Mammary epithelial cell (primary cell): ENCODE measurements at regions of chr12 and their contacts with region 1.

Region 1: GRCh38 chr12:118372541-118373495 is at the start of gene TAOK3:
- DNase-seq: peak; percentile 98
- H3K4me3 ChIP-seq: peak within 1 kb of the TSS; percentile 97 to 100 (median 98)
- H3K27ac ChIP-seq: peak within 1 kb of the TSS; percentile 72
- H3K4me1 ChIP-seq: peaks cover 28% of the 10 kb centered on the region
- H3K27me3 ChIP-seq: no peaks in the 10 kb centered on the region
- CTCF ChIP-seq: no peak
- total RNA-seq, gene TAOK3: 35.5 to 53.4 TPM

Region 2: DNA sequence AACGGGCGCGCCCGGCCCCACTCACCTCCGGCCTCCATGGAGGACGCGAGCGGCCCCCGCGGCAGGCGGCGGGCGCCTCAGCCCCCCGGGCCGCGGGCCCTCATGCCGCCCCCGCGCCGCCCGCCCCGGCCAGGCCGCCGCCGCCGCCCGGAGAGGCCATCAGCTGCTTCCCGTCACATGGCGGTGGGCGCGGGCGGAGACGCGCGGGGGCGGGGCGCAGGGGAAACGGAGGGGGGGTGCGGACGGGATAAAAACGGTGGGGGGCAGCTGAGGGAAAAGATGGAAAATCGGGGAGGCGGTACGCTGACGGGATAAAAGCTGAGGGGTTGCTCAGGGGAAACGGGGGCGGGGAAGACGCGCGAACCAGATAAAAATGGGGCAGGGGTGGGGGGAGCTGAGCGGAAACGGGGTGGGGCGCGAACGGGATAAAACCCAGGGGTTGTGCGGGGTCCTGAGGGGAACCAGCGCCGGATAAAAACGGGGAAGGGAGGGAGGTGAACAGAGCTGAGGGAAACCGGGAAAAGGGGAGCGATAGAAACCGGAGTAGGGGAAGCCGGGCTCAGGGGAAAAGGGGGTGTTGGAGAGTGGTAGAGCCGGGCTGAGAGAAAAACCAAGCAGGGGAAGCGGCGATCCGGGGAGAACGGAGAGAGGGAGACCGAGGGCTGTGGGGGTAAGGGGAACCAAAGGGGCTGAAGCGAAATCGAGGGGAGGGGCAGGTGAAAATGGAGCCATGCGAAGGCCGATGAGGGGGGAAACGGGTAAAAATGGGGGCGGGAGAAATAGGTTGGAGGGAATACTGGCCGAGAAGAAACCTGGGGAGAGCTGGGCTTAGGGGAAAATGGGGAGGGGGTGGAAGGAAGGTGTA is 311.6 kb before region 1 on chr12 and contains the start of gene WSB2:
- CTCF ChIA-PET with region 1: no interaction called
- dilution Hi-C with region 1: no loop called
- in situ Hi-C with region 1: no loop called
- intact Hi-C with region 1: loop called (anchors 1 kb)
- DNase-seq: peak; percentile 26
- H3K4me3 ChIP-seq: peak within 1 kb of the TSS; percentile 77 to 93 (median 84)
- H3K27ac ChIP-seq: peak within 1 kb of the TSS; percentile 82
- H3K4me1 ChIP-seq: peaks cover 11% of the 10 kb centered on the region
- H3K27me3 ChIP-seq: no peaks in the 10 kb centered on the region
- CTCF ChIP-seq: no peak
- total RNA-seq, gene WSB2: 93.5 to 165 TPM

Region 3: DNA sequence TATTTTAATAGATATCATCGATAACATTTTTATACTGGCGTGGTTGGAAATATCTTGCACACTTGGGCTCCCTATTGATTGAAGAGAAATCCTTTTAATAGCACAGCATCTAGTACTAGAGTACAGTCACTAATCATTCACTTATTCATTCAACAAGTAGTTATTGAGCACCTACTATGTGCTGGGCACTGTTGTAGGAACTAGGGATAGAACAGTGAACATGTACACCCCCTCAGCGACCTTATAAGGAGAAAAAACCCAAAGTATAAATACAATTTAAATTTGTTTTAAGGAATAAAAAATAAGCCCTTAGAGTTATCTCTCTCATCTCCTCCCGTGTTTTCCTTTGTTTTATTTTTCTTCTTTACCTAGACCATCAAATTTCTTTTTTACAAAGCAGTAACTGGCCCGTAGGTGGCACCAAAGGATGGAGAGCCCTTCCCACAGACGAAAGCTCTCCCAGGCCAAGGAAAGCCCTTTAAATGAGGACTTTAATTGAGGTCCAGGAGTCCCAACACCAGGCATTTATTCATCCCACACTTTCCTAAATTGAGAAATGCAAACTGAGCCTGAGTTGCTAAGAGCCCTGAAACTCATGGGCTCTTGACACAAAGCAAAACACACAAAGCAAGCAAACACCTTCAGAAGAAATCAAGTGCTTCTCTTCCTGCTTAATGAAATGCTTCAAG is 207.9 kb before region 1 on chr12:
- CTCF ChIA-PET with region 1: interaction called, 4 read pairs
- dilution Hi-C with region 1: no loop called
- in situ Hi-C with region 1: no loop called
- intact Hi-C with region 1: loop called (anchors 1 kb)
- DNase-seq: no peak
- H3K4me3 ChIP-seq: no peak overlapping the region
- H3K27ac ChIP-seq: no peak overlapping the region
- H3K4me1 ChIP-seq: no peaks in the 10 kb centered on the region
- H3K27me3 ChIP-seq: no peaks in the 10 kb centered on the region
- CTCF ChIP-seq: peak; percentile 33 to 57

Region 4: GRCh38 chr12:118237052-118237665 is 135.7 kb before region 1 on chr12:
- CTCF ChIA-PET with region 1: interaction called, 6 read pairs
- dilution Hi-C with region 1: no loop called
- in situ Hi-C with region 1: no loop called
- intact Hi-C with region 1: loop called (anchors 1 kb)
- DNase-seq: no peak
- H3K4me3 ChIP-seq: no peak overlapping the region
- H3K27ac ChIP-seq: peak overlapping the region; percentile 67
- H3K4me1 ChIP-seq: peaks cover 23% of the 10 kb centered on the region
- H3K27me3 ChIP-seq: no peaks in the 10 kb centered on the region
- CTCF ChIP-seq: no peak

Region 5: DNA sequence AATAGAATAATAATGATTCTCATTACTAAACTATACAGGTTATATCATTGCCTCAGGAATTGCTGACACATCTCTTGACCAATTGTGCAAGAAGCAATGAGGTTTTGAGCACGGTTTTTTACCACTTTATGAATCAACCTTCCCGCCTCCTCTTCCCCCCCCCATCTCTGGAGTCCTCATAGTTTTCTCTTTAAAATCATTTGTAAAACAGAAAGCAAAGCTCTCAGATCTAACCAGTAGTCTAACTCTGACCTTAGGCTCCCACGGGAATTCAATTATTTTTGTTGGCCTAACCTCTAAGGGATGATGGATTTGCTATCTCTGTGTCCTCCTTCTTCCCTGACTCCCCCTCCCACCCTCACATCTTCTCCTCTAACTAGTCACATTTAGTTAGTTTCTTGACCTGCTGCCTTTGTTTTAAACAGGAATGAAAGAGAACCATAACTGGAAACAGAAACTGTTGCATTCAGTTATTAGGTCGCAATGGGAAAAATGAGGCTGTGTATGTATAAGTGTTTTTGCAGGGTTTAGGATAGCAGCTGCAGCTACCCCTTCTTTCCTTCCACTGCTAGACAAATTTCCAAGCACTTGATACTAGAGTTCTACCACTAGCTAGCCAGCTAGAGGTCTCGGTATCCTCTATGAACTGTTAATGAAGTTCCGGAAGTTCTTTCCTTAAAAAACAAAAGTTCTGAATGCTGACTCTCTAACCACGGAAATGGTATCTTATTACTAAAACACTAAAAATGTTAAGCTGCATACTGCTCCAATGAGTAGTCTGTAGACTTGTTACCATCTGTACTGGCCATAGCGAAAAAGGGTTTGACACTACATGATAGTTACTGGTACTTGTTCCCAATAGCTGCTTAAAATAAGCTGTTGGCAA is 65.5 kb before region 1 on chr12:
- CTCF ChIA-PET with region 1: interaction called, 4 read pairs
- dilution Hi-C with region 1: no loop called
- in situ Hi-C with region 1: no loop called
- intact Hi-C with region 1: loop called (anchors 1 kb)
- DNase-seq: peak; percentile 84
- H3K4me3 ChIP-seq: peak overlapping the region; percentile 32 to 39 (median 36)
- H3K27ac ChIP-seq: peak overlapping the region; percentile 86
- H3K4me1 ChIP-seq: peaks cover 35% of the 10 kb centered on the region
- H3K27me3 ChIP-seq: no peaks in the 10 kb centered on the region
- CTCF ChIP-seq: no peak

Region 6: DNA sequence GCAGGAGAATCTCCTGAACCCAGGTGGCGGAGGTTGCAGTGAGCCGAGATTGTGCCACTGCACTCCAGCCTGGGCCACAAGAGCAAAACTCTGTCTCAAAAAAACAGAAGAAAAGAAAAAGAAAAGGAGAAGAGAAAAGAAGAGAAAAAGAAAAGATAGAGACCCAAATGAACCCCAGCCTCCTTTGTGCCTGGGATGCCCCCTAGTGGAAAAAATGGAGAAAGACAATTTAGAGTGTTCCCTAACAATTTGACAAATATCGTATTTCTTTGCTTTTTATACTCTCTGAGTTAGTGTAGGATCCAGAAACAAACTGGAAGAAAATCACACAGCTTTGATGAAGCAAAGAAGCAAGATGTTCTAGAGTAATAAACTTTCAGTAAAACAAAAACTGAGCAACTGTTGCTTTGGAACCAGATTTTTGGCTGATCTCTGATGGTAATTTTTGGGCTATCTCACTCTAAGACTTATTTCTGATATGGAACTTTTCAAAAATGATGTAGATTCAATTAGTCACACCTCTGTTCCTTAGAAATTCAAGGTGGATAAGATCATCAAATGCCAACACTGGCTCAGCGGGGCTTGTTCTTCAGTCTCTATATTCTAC is 1276.5 kb after region 1 on chr12:
- CTCF ChIA-PET with region 1: no interaction called
- dilution Hi-C with region 1: no loop called
- in situ Hi-C with region 1: no loop called
- intact Hi-C with region 1: loop called (anchors 5 kb)
- DNase-seq: no peak
- H3K4me3 ChIP-seq: no peak overlapping the region
- H3K27ac ChIP-seq: no peak overlapping the region
- H3K4me1 ChIP-seq: no peaks in the 10 kb centered on the region
- H3K27me3 ChIP-seq: no peaks in the 10 kb centered on the region
- CTCF ChIP-seq: peak; percentile 70 to 74